ENCODE measurements at regions of chr1 and their contacts with region 1.

Region 1: GRCh38 chr1:66929999-66930822 is 5.4 kb downstream of the MIER1 start:
- DNase-seq: peak; percentile 93
- H3K4me3 Mint-ChIP-seq: peak overlapping the region; percentile 89
- H3K27ac Mint-ChIP-seq: peak overlapping the region; percentile 93
- H3K4me1 Mint-ChIP-seq: peaks cover 72% of the 10 kb centered on the region
- H3K27me3 Mint-ChIP-seq: no peaks in the 10 kb centered on the region

Region 2: GRCh38 chr1:65148548-65149350 is 1781.5 kb before region 1 on chr1:
- intact Hi-C with region 1: loop called (anchors 5 kb)
- DNase-seq: peak; percentile 55
- H3K4me3 Mint-ChIP-seq: peak overlapping the region; percentile 94
- H3K27ac Mint-ChIP-seq: peak overlapping the region; percentile 90
- H3K4me1 Mint-ChIP-seq: peaks cover 52% of the 10 kb centered on the region
- H3K27me3 Mint-ChIP-seq: peaks cover 7% of the 10 kb centered on the region

Region 3: GRCh38 chr1:66944330-66945274 is 14.4 kb after region 1 on chr1:
- intact Hi-C with region 1: loop called (anchors 1 kb)
- DNase-seq: no peak
- H3K4me3 Mint-ChIP-seq: no peak overlapping the region
- H3K27ac Mint-ChIP-seq: no peak overlapping the region
- H3K4me1 Mint-ChIP-seq: peaks cover 46% of the 10 kb centered on the region
- H3K27me3 Mint-ChIP-seq: no peaks in the 10 kb centered on the region

Region 4: DNA sequence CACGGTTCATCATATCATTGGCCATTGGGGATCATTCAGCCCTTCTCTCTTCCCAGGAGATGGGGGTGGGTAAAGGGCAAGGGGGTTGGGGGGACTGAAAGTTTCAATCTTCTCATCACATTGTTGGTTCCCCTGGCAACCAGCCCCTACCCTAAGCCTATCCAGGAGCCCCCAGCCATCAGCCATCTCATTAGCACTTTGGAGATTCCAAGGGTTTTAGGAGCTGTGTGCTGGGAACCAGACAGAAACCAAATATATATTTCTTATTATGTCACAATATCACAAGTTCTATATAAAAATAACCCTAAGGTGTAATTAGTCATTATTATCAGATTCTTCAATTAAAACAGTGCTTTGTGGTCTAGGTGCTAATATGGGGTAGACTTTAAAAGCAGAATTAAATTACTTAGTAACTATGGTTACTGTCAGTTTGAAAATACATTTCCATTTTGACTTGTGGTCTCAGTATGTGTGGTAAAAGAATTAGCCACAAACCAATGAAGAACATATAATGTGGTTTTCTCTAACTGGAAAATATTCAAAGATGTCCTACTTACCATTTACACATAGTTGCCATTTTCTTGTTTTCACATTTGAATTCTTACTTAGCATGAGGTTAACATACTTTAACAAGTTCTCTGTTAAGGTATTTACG is 264.1 kb after region 1 on chr1:
- intact Hi-C with region 1: loop called (anchors 5 kb)
- DNase-seq: no peak
- H3K4me3 Mint-ChIP-seq: no peak overlapping the region
- H3K27ac Mint-ChIP-seq: no peak overlapping the region
- H3K4me1 Mint-ChIP-seq: peaks cover 38% of the 10 kb centered on the region
- H3K27me3 Mint-ChIP-seq: no peaks in the 10 kb centered on the region

Region 5: GRCh38 chr1:67339623-67340343 is 409.6 kb after region 1 on chr1:
- intact Hi-C with region 1: loop called (anchors 5 kb)
- DNase-seq: peak; percentile 47
- H3K4me3 Mint-ChIP-seq: peak overlapping the region; percentile 66
- H3K27ac Mint-ChIP-seq: peak overlapping the region; percentile 90
- H3K4me1 Mint-ChIP-seq: peaks cover 80% of the 10 kb centered on the region
- H3K27me3 Mint-ChIP-seq: no peaks in the 10 kb centered on the region